ENCODE measurements at regions of chr11 and their contacts with region 1.

Region 1: DNA sequence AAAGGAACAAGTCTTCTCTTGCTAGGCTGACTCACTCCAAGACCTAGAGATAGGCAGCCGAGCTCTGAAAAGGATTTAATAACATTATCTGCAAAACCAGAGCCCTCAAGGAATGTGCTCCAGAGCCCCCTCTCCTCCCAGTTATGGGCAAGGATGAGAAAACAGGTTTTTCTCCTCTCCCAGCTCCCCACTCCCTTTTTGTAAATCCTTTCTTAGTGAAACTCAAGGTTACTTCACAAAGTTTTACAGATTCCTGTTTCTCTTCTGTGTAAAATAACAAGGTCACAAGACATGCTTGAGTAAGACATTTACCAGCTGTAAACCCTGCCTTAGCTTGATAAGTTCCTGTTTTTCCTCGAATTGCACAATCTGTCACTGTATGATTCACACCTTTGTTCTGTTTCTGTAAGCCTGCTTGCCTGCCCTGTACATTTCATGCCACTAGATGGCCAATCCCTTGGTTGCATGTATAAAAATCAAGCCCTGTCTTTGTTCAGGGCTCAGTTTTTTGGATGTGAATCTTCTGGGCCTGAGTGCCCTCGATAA is 489.4 kb downstream of the KCNA4 start:
- DNase-seq: peak; percentile 72
- ATAC-seq: peak; percentile 90
- H3K4me3 ChIP-seq: no peak overlapping the region
- H3K27ac ChIP-seq: no peak overlapping the region
- H3K4me1 ChIP-seq: no peaks in the 10 kb centered on the region
- H3K27me3 ChIP-seq: no peaks in the 10 kb centered on the region
- CTCF ChIP-seq: peak; percentile 65

Region 2: DNA sequence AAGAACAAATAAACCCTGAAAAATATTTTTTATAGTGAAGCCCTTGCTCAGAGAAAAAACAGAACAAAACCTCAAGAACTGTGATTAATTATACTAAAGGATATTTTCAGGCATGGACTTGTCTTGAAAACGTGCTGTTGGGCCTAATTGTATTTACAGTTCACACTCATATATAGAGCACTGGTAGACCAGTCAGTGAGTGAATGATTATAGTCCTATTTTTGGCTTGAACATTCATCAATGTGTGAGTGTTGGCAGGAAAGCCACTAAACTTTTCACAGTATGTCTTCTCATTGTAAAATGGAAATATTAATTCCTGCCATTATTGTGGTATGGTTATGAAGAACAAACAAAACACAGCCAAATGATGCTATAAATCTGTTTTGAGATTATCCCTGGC is 26.5 kb after region 1 on chr11:
- CTCF ChIA-PET with region 1: no interaction called
- POLR2A ChIA-PET with region 1: no interaction called
- intact Hi-C with region 1: loop called (anchors 1 kb)
- DNase-seq: no peak
- ATAC-seq: no peak
- H3K4me3 ChIP-seq: no peak overlapping the region
- H3K27ac ChIP-seq: no peak overlapping the region
- H3K4me1 ChIP-seq: no peaks in the 10 kb centered on the region
- H3K27me3 ChIP-seq: peaks cover 16% of the 10 kb centered on the region; the same call in 1 of the 2 replicates
- CTCF ChIP-seq: no peak

Region 3: GRCh38 chr11:30377347-30377746 is 849.9 kb after region 1 on chr11:
- CTCF ChIA-PET with region 1: no interaction called
- POLR2A ChIA-PET with region 1: no interaction called
- intact Hi-C with region 1: no loop called
- DNase-seq: no peak
- ATAC-seq: no peak
- H3K4me3 ChIP-seq: no peak overlapping the region
- H3K27ac ChIP-seq: no peak overlapping the region
- H3K4me1 ChIP-seq: no peaks in the 10 kb centered on the region
- H3K27me3 ChIP-seq: 0 out of 2 replicates have a peak, but pooled peaks cover 6% of the 10 kb centered on the region
- CTCF ChIP-seq: no peak